A673 (cell line): ENCODE measurements at regions of chr17 and their contacts with region 1.

Region 1: DNA sequence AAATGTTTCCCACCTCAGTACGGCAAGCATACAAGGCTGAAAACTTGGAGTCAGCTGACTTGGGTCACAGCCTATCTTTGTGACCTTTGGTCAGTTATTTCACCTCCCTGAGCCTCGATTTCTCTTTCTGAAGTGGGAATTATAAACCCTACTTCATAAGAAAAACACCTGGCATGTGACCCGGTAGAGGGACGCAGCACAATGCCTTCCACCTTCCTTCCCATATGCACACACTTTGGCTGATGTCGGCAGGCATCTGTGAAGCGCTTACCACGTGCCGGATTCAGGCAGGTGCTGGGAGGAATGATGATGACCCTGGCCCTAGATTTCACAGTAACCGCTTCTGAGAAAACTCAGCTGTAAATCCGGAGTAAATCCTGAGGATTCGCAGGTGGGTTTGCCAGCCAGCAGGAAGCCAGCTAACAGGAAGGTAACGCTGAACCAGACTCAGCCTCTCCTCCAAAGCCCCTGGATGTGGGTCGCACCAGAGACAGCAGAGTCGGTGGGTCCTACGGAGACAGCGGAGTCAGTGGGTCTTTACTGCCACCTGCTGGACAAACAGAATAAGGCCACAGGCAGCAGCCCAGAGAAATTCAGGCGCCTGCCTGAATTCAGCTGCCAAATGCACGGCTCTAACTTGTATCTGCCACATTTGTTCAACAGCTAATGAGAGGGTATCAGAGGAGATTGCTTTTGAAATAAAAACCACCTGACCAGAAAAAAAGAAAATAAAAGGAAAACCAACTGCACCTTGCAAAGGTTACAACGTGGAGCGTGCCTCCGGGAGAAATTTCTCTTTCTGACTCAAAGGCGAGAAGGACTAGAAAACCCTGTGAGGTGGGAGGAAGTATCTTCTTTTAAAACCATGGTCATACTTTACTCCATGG is 16.6 kb downstream of the COPRS start:
- DNase-seq: peak; percentile 60
- H3K4me3 ChIP-seq: no peak overlapping the region
- H3K27ac ChIP-seq: no peak overlapping the region
- H3K4me1 ChIP-seq: no peaks in the 10 kb centered on the region
- H3K27me3 ChIP-seq: no peaks in the 10 kb centered on the region
- CTCF ChIP-seq: peak; percentile 77

Region 2: DNA sequence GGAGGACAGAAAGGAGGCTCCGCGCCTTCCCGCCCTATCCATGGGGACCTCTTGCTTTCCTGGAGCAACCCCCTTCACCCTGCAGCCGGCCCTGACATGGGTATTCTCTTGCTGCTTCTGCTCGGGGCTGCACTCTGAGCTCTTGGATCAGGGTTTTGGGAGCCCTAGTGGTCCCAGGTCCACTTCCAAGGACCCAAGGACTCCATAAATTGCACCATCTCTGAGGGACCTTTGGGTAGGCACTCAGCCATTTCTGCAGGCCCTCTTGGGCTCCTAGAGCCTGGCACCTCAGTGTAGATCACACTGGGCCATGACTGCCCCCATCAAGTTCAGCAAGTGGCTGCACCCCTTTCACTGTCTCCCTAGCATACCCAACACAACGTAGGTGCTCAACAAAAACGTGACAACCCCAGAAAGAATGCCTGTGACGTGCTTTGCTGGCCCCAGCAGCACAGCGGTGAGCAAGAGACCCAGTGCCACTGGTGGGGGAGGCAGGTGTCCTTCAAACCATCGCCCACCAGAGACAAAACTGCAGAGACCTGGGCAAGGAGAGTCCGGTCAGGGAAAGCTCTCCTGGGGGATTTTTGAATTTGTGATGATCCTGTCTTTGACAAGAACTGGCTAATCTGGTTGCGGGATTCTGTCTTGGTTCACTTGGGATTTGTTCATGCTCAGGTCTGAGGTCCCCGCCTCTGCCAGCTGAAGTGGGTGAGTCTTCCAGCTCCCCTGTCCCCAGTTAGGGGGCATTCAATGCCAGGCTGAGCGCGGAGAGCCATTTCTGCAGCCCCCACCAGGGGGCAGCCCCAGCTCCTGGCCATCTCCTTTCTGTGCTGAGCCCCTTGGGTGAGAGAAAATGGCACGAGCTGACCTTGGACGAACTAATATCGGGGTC is 453.4 kb before region 1 on chr17:
- CTCF ChIA-PET with region 1: no interaction called
- POLR2A ChIA-PET with region 1: no interaction called
- intact Hi-C with region 1: loop called (anchors 5 kb)
- DNase-seq: peak; percentile 39
- H3K4me3 ChIP-seq: no peak overlapping the region
- H3K27ac ChIP-seq: no peak overlapping the region
- H3K4me1 ChIP-seq: no peaks in the 10 kb centered on the region
- H3K27me3 ChIP-seq: no peaks in the 10 kb centered on the region
- CTCF ChIP-seq: peak; percentile 64

Region 3: GRCh38 chr17:31437720-31438420 is 404.6 kb before region 1 on chr17:
- CTCF ChIA-PET with region 1: no interaction called
- POLR2A ChIA-PET with region 1: no interaction called
- intact Hi-C with region 1: loop called (anchors 5 kb)
- DNase-seq: no peak
- H3K4me3 ChIP-seq: no peak overlapping the region
- H3K27ac ChIP-seq: no peak overlapping the region
- H3K4me1 ChIP-seq: no peaks in the 10 kb centered on the region
- H3K27me3 ChIP-seq: no peaks in the 10 kb centered on the region
- CTCF ChIP-seq: no peak

Region 4: GRCh38 chr17:31533546-31534155 is 308.8 kb before region 1 on chr17:
- CTCF ChIA-PET with region 1: interaction called, 4 read pairs
- POLR2A ChIA-PET with region 1: no interaction called
- intact Hi-C with region 1: loop called (anchors 5 kb)
- DNase-seq: peak; percentile 41
- H3K4me3 ChIP-seq: no peak overlapping the region
- H3K27ac ChIP-seq: no peak overlapping the region
- H3K4me1 ChIP-seq: no peaks in the 10 kb centered on the region
- H3K27me3 ChIP-seq: no peaks in the 10 kb centered on the region
- CTCF ChIP-seq: peak; percentile 47

Region 5: GRCh38 chr17:31758646-31759045 is 83.8 kb before region 1 on chr17:
- CTCF ChIA-PET with region 1: no interaction called
- POLR2A ChIA-PET with region 1: no interaction called
- intact Hi-C with region 1: no loop called
- DNase-seq: no peak
- H3K4me3 ChIP-seq: no peak overlapping the region
- H3K27ac ChIP-seq: no peak overlapping the region
- H3K4me1 ChIP-seq: no peaks in the 10 kb centered on the region
- H3K27me3 ChIP-seq: no peaks in the 10 kb centered on the region
- CTCF ChIP-seq: no peak

Region 6: GRCh38 chr17:31811101-31811500 is 31.3 kb before region 1 on chr17:
- CTCF ChIA-PET with region 1: no interaction called
- POLR2A ChIA-PET with region 1: no interaction called
- intact Hi-C with region 1: no loop called
- DNase-seq: no peak
- H3K4me3 ChIP-seq: no peak overlapping the region
- H3K27ac ChIP-seq: no peak overlapping the region
- H3K4me1 ChIP-seq: no peaks in the 10 kb centered on the region
- H3K27me3 ChIP-seq: no peaks in the 10 kb centered on the region
- CTCF ChIP-seq: no peak

Region 7: GRCh38 chr17:32298298-32298697 is 455.9 kb after region 1 on chr17:
- CTCF ChIA-PET with region 1: interaction called, 19 read pairs
- POLR2A ChIA-PET with region 1: no interaction called
- intact Hi-C with region 1: no loop called
- DNase-seq: no peak
- H3K4me3 ChIP-seq: no peak overlapping the region
- H3K27ac ChIP-seq: no peak overlapping the region
- H3K4me1 ChIP-seq: peaks cover 14% of the 10 kb centered on the region
- H3K27me3 ChIP-seq: no peaks in the 10 kb centered on the region
- CTCF ChIP-seq: no peak